MCF 10A (cell line): ENCODE measurements at regions of chr15 and their contacts with region 1.

Region 1: DNA sequence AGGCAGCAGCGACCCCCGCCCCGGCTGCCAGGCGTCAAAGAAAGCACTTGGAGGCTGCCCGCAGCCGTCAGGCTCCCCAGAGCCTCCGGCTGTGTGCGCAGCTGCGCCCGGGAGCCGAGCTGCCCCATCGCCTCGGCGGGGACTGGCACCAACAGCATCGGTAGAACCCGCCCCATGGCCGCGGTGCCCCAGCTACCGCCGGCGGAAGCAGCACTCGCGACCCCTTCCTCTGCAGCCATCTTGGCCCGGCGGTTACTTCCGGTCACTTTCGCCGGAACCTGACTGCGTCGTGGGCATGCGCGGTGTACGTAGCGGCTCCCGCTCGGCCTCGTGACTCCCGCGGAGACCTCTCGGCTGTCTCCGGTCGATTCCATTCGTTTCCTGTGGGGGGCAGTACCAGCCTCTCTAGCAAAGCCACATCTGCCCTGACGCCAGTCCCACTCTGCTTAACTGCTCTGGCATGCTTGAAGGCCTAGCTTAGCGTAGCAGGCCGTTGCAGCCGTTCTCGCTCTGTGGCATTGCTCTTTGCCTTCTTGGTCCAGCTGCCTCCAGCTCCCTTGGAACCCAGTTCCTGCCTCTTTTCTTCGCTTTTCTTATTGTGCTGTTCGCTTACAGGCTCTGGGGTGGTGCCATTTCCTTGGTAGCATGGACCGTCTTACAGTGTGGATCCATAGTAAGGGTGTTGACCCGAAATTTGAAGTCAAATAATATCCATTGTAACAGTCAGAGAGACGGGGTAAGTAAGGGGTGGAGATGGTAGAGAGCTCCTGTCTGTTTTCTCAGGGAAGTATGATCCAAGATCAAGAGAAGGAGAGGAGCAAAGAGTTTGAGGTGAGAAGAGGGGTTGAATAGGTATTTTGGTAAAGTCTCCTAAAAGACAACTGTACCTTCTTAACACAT is at the start of gene SPG11:
- DNase-seq: peak; percentile 97
- H3K4me3 Mint-ChIP-seq: peak within 1 kb of the TSS; percentile 97
- H3K27ac Mint-ChIP-seq: peak within 1 kb of the TSS; percentile 33
- H3K4me1 Mint-ChIP-seq: peaks cover 12% of the 10 kb centered on the region
- H3K27me3 Mint-ChIP-seq: no peaks in the 10 kb centered on the region
- CTCF ChIP-seq: peak; percentile 90
- total RNA-seq, gene SPG11: 65.1 and 69.0 TPM in 2 replicates

Region 2: DNA sequence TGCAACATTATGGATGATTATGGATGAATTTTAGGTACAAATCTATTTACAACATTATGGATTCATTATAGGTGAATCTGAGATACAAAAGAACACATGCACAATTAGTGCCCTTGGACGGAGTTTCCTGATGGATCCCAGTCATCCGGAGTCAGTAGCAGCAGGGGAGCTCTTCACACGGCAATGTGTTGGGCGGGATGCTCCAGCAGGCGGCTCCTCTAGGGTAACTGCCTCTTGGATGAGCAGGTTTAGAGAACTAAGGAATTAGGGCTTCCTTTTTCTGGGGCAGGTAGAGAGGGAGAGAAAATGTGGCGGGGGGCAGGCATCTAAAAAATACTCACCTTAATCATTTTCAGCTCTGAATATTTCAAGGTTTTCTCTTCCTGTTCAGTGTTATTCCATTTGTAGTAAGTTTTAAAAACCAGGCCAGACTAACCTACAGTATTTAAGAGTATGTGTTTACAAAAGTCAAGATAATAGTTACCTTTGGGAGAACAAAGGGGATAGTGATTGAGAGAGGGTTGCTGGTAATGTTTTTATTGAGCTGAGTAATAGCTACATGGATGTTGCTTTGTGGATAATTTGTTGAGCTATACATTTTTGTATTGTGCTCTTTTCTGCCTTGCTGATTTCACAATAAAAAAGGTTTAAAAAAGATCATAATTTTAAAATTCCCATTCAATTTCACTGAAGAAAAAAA is 402.5 kb before region 1 on chr15:
- CTCF ChIA-PET with region 1: no interaction called
- POLR2A ChIA-PET with region 1: no interaction called
- intact Hi-C with region 1: no loop called
- DNase-seq: no peak
- H3K4me3 Mint-ChIP-seq: no peak overlapping the region
- H3K27ac Mint-ChIP-seq: no peak overlapping the region
- H3K4me1 Mint-ChIP-seq: no peaks in the 10 kb centered on the region
- H3K27me3 Mint-ChIP-seq: peaks cover 11% of the 10 kb centered on the region
- CTCF ChIP-seq: no peak

Region 3: DNA sequence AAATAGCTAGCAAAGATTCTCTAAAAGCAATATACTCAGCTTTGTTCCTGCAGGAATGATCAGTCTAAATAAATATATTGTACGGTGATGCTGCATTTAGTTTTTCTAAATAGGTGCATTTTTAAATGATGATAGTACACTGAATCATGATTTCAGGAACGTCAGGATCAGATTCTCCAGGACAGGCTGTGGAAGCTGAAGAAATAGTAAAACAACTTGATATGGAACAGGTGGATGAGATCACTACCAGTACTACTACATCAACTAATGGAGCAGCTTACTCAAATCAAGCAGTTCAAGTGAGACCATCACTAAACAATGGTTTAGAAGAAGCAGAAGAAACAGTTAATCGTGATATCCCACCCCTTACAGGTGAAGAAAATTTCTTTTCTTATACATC is 173.0 kb before region 1 on chr15:
- CTCF ChIA-PET with region 1: no interaction called
- POLR2A ChIA-PET with region 1: no interaction called
- intact Hi-C with region 1: no loop called
- DNase-seq: no peak
- H3K4me3 Mint-ChIP-seq: no peak overlapping the region
- H3K27ac Mint-ChIP-seq: no peak overlapping the region
- H3K4me1 Mint-ChIP-seq: peaks cover 27% of the 10 kb centered on the region
- H3K27me3 Mint-ChIP-seq: no peaks in the 10 kb centered on the region
- CTCF ChIP-seq: no peak

Region 4: GRCh38 chr15:44584162-44584749 is 79.4 kb before region 1 on chr15:
- CTCF ChIA-PET with region 1: interaction called, 8 read pairs
- POLR2A ChIA-PET with region 1: no interaction called
- intact Hi-C with region 1: loop called (anchors 5 kb)
- DNase-seq: peak; percentile 66
- H3K4me3 Mint-ChIP-seq: no peak overlapping the region
- H3K27ac Mint-ChIP-seq: no peak overlapping the region
- H3K4me1 Mint-ChIP-seq: no peaks in the 10 kb centered on the region
- H3K27me3 Mint-ChIP-seq: no peaks in the 10 kb centered on the region
- CTCF ChIP-seq: peak; percentile 37

Region 5: GRCh38 chr15:44633603-44634002 is 30.1 kb before region 1 on chr15:
- CTCF ChIA-PET with region 1: interaction called, 5 read pairs
- POLR2A ChIA-PET with region 1: interaction called, 10 read pairs
- intact Hi-C with region 1: no loop called
- DNase-seq: peak; percentile 69
- H3K4me3 Mint-ChIP-seq: no peak overlapping the region
- H3K27ac Mint-ChIP-seq: peak overlapping the region; percentile 90
- H3K4me1 Mint-ChIP-seq: no peaks in the 10 kb centered on the region
- H3K27me3 Mint-ChIP-seq: no peaks in the 10 kb centered on the region
- CTCF ChIP-seq: no peak

Region 6: DNA sequence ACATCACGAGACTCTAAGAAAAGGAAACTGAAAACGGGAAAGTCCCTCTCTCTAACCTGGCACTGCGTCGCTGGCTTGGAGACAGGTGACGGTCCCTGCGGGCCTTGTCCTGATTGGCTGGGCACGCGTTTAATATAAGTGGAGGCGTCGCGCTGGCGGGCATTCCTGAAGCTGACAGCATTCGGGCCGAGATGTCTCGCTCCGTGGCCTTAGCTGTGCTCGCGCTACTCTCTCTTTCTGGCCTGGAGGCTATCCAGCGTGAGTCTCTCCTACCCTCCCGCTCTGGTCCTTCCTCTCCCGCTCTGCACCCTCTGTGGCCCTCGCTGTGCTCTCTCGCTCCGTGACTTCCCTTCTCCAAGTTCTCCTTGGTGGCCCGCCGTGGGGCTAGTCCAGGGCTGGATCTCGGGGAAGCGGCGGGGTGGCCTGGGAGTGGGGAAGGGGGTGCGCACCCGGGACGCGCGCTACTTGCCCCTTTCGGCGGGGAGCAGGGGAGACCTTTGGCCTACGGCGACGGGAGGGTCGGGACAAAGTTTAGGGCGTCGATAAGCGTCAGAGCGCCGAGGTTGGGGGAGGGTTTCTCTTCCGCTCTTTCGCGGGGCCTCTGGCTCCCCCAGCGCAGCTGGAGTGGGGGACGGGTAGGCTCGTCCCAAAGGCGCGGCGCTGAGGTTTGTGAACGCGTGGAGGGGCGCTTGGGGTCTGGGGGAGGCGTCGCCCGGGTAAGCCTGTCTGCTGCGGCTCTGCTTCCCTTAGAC is 47.9 kb after region 1 on chr15 and contains the start of gene B2M:
- CTCF ChIA-PET with region 1: interaction called, 22 read pairs
- POLR2A ChIA-PET with region 1: interaction called, 148 read pairs
- intact Hi-C with region 1: loop called (anchors 1 kb)
- DNase-seq: peak; percentile 98
- H3K4me3 Mint-ChIP-seq: peak within 1 kb of the TSS; percentile 92
- H3K27ac Mint-ChIP-seq: peak within 1 kb of the TSS; percentile 96
- H3K4me1 Mint-ChIP-seq: peaks cover 23% of the 10 kb centered on the region
- H3K27me3 Mint-ChIP-seq: no peaks in the 10 kb centered on the region
- CTCF ChIP-seq: no peak
- total RNA-seq, gene B2M: 605 and 755 TPM in 2 replicates

Region 7: DNA sequence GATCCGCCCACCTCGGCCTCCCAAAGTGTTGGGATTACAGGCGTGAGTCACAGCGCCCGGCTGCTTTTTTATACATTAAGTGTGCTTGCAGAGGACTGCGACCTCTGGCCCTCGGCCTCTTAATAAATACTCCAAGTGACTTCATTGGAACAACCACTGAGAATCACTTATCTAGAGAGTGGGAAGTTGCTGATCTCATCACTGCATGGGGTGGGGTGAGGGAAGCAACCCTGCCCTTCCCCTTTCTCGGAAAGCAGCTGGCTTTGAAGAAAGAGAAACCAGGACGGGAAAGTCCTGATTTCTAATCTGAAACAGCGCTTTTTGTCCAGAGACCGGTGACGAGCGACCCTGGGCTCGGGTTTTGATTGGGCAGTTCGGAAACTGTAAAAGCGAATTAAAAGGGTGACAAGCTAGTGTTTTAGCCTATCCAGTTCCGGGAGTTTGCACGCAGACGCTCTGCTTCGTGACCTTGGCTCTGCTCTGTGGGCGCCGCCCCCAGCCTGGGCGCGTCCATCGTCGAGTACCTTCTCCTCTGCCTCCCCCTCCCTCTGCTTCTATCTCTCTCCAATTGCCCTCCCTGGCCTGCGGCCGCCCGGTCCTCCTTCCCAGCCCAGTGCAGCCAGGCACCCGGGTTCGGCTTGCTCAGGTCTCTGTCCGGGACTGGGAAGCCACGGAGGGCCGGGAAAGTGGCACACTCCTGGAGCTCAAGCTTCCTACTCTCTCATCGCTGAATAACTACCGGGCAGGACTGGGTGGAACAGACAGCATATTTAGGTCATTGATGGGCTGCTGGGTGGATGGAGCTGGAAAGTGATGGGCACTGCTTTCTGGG is 65.1 kb after region 1 on chr15:
- CTCF ChIA-PET with region 1: interaction called, 83 read pairs
- POLR2A ChIA-PET with region 1: interaction called, 120 read pairs
- intact Hi-C with region 1: no loop called
- DNase-seq: peak; percentile 98
- H3K4me3 Mint-ChIP-seq: peak overlapping the region; percentile 94
- H3K27ac Mint-ChIP-seq: peak overlapping the region; percentile 89
- H3K4me1 Mint-ChIP-seq: peaks cover 20% of the 10 kb centered on the region
- H3K27me3 Mint-ChIP-seq: no peaks in the 10 kb centered on the region
- CTCF ChIP-seq: no peak

Region 8: GRCh38 chr15:44782516-44782915 is 118.9 kb after region 1 on chr15:
- CTCF ChIA-PET with region 1: interaction called, 9 read pairs
- POLR2A ChIA-PET with region 1: interaction called, 10 read pairs
- intact Hi-C with region 1: no loop called
- DNase-seq: peak; percentile 2
- H3K4me3 Mint-ChIP-seq: no peak overlapping the region
- H3K27ac Mint-ChIP-seq: peak overlapping the region; percentile 14
- H3K4me1 Mint-ChIP-seq: peaks cover 14% of the 10 kb centered on the region
- H3K27me3 Mint-ChIP-seq: peaks cover 11% of the 10 kb centered on the region
- CTCF ChIP-seq: no peak